Activated CD4-positive, alpha-beta memory T cell treated with anti-CD3 and anti-CD28 coated beads for 36 hours (primary cell): ENCODE measurements at regions of chr20 and their contacts with region 1.

Region 1: DNA sequence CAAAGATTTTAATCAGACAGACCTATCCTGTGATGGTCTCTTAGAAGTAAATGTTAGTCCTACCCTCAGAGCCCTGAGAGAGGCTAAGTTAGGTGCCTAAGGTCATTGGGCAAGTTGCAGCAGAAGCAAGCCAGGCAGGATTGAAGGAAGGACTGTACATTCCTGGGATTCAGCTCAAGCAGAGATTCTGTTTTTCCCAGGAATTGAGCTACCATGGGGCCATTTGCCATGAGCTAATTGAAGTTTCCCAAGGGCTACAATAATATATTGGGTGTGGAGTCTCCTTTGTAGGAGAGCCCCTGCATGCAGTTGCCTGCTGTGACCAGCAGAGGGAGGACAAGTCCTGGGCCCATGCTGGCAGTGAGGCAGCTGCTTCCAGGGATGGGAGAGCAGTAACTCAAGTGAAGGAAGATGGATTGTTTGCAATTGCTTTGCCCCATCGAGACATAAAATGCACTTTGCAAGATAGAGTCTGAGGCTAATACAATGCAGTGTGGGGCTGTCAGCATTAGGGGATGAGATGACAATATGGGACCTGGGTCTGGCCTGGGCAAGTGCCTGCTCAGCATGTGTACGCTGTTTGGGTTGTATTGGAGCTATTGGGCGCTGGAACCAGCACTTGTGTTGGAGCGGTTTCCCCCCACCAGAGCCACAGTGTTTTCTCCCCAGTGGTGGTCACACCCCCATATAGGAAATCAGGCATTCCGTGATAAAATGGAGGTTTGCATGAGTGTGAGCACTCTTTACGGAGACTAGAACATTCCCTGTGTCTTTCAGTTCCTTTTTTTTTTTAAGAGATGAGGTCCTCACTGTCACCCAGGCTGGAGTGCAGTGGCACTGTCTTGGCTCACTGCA is 27.9 kb downstream of the DNMT3B start:
- DNase-seq: peak; percentile 79
- H3K4me3 Mint-ChIP-seq: no peak overlapping the region
- H3K27ac Mint-ChIP-seq: no peak overlapping the region
- H3K4me1 Mint-ChIP-seq: peaks cover 31% of the 10 kb centered on the region
- H3K27me3 Mint-ChIP-seq: no peaks in the 10 kb centered on the region

Region 2: GRCh38 chr20:32819992-32820710 is 30.0 kb after region 1 on chr20:
- CTCF ChIA-PET with region 1: interaction called, 9 read pairs
- POLR2A ChIA-PET with region 1: interaction called, 3 read pairs
- intact Hi-C with region 1: loop called (anchors 1 kb)
- DNase-seq: peak; percentile 86
- H3K4me3 Mint-ChIP-seq: peak overlapping the region; percentile 98
- H3K27ac Mint-ChIP-seq: peak overlapping the region; percentile 94
- H3K4me1 Mint-ChIP-seq: peaks cover 36% of the 10 kb centered on the region
- H3K27me3 Mint-ChIP-seq: no peaks in the 10 kb centered on the region

Region 3: DNA sequence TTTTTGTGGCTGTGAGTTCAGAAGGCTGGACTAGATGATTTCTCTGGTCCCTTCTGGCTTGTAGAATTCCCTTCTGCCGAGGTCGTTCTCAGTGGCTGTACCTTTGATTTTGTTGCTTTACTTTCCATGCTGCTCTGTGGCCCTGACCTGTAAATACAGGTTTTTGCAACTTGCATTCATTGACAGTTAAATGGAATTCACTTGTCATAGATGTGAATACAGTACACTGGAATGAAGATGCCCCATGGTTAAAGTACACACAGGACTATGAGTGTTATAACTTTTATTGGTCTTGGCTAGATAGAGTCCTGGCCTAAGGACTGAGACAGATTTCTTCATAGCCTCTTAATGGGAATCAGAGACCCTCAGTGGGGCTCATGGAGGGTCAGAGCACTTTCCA is 55.7 kb after region 1 on chr20:
- CTCF ChIA-PET with region 1: interaction called, 10 read pairs
- POLR2A ChIA-PET with region 1: no interaction called
- intact Hi-C with region 1: no loop called
- DNase-seq: no peak
- H3K4me3 Mint-ChIP-seq: no peak overlapping the region
- H3K27ac Mint-ChIP-seq: no peak overlapping the region
- H3K4me1 Mint-ChIP-seq: peaks cover 25% of the 10 kb centered on the region
- H3K27me3 Mint-ChIP-seq: no peaks in the 10 kb centered on the region

Region 4: GRCh38 chr20:32894026-32894483 is 103.9 kb after region 1 on chr20:
- CTCF ChIA-PET with region 1: interaction called, 4 read pairs
- POLR2A ChIA-PET with region 1: no interaction called
- intact Hi-C with region 1: loop called (anchors 1 kb)
- DNase-seq: peak; percentile 48
- H3K4me3 Mint-ChIP-seq: no peak overlapping the region
- H3K27ac Mint-ChIP-seq: no peak overlapping the region
- H3K4me1 Mint-ChIP-seq: no peaks in the 10 kb centered on the region
- H3K27me3 Mint-ChIP-seq: no peaks in the 10 kb centered on the region

Region 5: GRCh38 chr20:32991383-32991782 is 201.3 kb after region 1 on chr20:
- CTCF ChIA-PET with region 1: no interaction called
- POLR2A ChIA-PET with region 1: no interaction called
- intact Hi-C with region 1: no loop called
- DNase-seq: no peak
- H3K4me3 Mint-ChIP-seq: no peak overlapping the region
- H3K27ac Mint-ChIP-seq: no peak overlapping the region
- H3K4me1 Mint-ChIP-seq: peaks cover 6% of the 10 kb centered on the region
- H3K27me3 Mint-ChIP-seq: no peaks in the 10 kb centered on the region

Region 6: DNA sequence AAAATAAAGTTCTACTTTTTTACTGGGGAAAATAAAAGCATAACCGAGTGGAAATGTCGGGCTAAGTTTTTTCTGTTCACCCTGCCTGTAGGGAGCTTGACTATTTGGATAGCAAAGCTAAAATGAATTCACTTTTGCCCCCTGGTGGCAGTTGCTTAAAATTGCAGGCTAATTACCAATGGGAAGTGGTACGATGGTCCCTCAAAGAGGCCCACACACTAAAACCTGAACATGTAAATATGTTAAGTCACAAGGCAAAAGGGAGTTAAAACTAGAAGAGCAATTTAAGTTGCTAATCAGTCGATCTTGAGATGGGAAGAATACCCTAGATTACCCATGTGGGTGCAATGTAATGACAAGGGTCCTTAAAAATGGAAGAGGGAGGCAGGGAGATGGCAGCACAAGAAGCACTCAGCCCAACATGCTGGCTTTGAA is 215.0 kb after region 1 on chr20:
- CTCF ChIA-PET with region 1: interaction called, 13 read pairs
- POLR2A ChIA-PET with region 1: no interaction called
- intact Hi-C with region 1: no loop called
- DNase-seq: peak; percentile 25
- H3K4me3 Mint-ChIP-seq: no peak overlapping the region
- H3K27ac Mint-ChIP-seq: no peak overlapping the region
- H3K4me1 Mint-ChIP-seq: peaks cover 10% of the 10 kb centered on the region
- H3K27me3 Mint-ChIP-seq: no peaks in the 10 kb centered on the region

Region 7: DNA sequence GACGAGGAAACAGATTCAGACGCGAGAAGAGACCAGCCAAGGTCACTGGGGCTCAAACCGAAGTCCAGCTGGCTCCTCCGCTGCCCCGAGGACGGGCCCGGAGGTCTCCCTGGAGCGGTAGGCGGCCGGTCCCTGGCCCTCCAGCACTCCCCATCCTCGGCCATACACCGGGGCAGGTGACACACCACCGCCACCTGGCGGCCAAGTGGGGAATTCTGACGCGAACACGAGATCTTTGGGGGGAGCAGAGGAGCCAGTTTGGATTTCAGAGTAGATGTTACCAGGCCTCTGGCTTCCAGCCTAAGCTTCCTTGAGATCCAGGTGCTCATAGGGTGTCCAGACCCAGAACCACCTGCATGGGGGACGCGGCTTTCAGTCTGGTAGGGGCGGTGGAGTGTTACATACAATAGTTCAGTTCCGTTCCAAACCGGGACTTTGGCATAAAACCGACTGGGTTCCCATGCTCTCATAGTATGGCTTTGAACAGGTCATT is 509.0 kb after region 1 on chr20:
- CTCF ChIA-PET with region 1: no interaction called
- POLR2A ChIA-PET with region 1: no interaction called
- intact Hi-C with region 1: loop called (anchors 5 kb)
- DNase-seq: peak; percentile 80
- H3K4me3 Mint-ChIP-seq: no peak overlapping the region
- H3K27ac Mint-ChIP-seq: no peak overlapping the region
- H3K4me1 Mint-ChIP-seq: no peaks in the 10 kb centered on the region
- H3K27me3 Mint-ChIP-seq: peaks cover 9% of the 10 kb centered on the region